Mucosa of descending colon (tissue), 3 donors: ENCODE measurements at regions of chr10 and their contacts with region 1.

Region 1: DNA sequence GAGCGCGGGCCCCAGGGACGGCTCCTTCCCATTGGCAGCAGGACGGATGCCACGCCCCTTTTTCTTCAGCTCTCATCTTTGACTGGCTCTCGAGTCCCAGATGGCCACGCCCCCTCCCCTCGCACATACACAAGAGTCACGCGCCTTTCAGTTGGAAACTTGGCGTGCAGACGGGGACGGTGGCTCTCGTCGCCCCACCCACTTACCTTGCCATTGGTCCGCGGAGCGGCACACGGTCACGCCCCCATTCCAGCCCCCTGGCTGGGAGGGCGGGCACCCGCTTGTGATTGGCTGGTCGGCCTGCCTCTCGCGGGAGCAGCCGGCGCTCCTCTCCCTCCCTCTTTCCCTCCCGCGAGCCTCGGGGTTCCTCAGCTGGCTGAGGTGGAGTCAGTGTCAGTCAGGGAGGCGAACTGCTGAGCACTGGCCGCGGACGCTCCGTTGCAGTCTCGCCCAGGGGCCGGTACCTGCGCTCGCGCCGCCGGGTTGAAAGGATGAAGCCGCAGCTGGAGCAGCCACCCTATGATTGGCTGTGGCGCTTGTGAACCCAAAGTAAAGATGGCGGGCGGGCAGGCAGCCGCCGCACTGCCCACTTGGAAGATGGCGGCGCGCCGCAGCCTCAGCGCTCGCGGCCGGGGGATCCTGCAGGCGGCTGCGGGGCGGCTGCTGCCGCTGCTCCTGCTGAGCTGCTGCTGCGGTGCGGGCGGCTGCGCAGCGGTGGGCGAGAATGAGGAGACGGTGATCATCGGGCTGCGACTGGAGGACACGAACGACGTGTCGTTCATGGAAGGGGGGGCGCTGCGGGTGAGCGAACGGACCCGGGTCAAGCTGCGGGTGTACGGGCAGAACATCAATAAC is at the start of gene CNNM2:
- DNase-seq: peak; percentile 99 to 100 (median 100)
- ATAC-seq: peak; percentile 96
- H3K4me3 ChIP-seq: peak within 1 kb of the TSS; percentile 88
- H3K4me1 ChIP-seq: peaks cover 8% of the 10 kb centered on the region
- CTCF ChIP-seq: no peak
- total RNA-seq, gene CNNM2: 22.6 to 53.2 (median 27.3) TPM

Region 2: GRCh38 chr10:103069453-103070331 is 151.5 kb after region 1 on chr10:
- intact Hi-C with region 1: loop called (anchors 5 to 10 kb)
- DNase-seq: peak; percentile 62 to 88 (median 70)
- ATAC-seq: peak; percentile 90
- H3K4me3 ChIP-seq: no peak overlapping the region
- H3K4me1 ChIP-seq: no peaks in the 10 kb centered on the region
- CTCF ChIP-seq: peak; percentile 37

Region 3: GRCh38 chr10:103244663-103245271 is 326.6 kb after region 1 on chr10:
- intact Hi-C with region 1: loop called (anchors 5 to 10 kb)
- DNase-seq: peak in 2 of 3 donors; percentile 70 to 84
- ATAC-seq: peak; percentile 49
- H3K4me3 ChIP-seq: no peak overlapping the region
- H3K4me1 ChIP-seq: peaks cover 20% of the 10 kb centered on the region
- CTCF ChIP-seq: peak; percentile 64